Lower leg skin (tissue), 4 donors: ENCODE measurements at regions of chr18 and their contacts with region 1.

Region 1: DNA sequence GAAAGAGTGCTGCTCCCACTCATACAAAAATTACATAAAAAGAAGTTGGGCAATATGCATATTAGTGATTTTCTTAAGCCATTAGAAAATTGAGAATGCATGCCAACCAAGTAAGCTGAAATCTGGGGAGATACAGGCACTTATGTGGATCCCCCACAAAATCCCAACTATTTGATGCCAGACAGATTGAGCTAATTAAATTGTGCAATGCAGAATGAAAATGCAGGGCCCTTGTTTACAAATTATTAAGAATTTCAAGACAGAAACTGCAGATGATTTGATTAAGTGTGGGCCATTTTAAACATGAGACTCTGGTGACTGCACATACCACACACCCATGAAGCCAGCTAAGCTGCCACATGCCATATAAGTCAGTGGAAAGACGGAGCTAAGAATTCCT is 554.5 kb downstream of the CBLN2 start:
- DNase-seq: no peak
- H3K4me3 ChIP-seq: no peak overlapping the region
- CTCF ChIP-seq: no peak
- POLR2A ChIP-seq: no peak

Region 2: DNA sequence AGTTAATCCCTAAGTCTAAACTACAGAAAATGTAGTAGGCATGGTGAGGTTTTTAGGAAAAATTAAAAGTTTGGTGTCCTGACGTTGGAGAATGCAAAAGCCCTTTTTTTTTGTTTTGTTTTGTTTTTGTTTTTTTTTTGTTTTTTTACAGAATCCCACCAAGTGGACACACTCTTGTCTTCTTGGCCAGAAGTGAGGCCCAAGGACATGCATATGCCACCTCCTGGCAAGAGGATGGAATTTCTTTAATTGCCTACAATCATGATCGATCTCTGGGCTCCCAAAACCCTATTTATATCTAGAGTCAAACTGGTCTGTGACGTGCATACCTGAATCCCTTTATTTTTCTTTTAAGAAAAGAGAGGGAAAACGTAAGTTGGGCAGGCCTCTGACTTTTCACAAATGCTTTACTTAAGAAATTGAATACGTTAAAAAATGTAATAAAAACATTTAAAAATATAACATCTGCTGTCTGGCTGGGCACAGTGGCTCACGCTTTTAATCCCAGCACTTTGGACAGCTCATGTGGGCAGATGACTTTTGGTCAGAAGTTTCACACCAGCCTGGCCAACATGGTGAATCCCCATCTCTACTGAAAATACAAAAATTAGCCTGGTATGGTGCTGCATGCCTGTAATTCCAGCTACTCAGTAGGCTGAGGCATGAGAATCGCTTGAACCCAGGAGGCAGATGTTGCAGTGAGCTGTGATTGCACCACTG is 51.9 kb after region 1 on chr18:
- intact Hi-C with region 1: loop called (anchors 10 kb)
- DNase-seq: no peak
- H3K4me3 ChIP-seq: no peak overlapping the region
- CTCF ChIP-seq: no peak
- POLR2A ChIP-seq: no peak

Region 3: DNA sequence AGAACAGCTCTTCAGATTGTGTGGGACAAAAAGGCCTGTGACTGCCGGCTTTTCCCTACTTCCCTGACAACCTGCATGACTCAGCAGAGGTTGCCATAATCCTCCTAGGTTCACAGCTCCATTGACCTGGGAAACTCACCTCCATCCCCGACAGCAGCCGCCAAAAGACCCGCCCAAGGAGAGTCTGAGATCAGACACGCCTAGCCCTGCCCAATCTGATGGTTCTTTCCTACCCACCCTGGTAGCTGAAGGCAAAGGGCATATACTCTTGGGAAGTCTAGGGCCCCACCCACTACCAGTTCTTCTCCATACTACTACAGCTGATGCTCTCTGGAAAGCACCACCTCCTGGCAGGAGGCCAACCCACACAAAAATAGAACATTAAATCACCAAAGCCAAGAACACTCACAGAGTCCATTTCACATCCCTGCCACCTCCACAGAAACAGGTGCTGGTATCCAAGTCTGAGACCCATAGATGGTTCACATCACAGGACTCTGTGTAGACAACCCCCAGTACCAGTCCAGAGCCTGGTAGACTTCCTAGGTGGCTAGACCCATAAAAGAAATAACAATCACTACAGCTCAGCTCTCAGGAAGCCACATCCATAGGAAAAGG is 737.5 kb after region 1 on chr18:
- intact Hi-C with region 1: no loop called
- DNase-seq: no peak
- H3K4me3 ChIP-seq: no peak overlapping the region
- CTCF ChIP-seq: no peak
- POLR2A ChIP-seq: no peak